IMR-90 (cell line): ENCODE measurements at regions of chrX and their contacts with region 1.

Region 1: DNA sequence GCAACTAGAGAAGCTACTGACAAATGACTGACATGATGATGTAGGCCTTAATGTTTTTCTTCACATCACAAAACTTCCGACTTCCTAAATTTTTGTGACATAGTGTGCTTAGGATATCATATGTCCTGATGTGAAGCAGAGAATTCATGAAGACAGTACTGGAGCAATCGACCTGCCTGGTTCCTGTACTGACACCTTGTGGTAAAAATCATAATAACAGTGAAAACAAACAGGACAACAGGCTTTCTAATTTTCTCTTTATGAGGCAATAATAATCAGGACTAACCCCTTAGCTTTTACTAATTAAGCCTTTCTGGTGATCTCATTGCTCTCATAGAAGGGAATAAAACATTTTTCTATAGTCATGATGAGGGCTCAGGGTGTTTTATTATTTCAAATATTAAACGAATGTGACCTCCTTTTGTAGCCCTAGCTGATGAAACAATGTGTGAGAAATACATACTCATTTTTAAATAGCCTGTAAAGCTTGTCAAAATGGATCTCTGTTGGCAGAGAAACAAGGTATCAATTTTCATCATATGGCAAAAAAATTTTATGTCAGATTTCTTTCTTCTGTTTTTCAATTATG is 158.4 kb downstream of the TENT5D start:
- DNase-seq: peak; percentile 6
- ATAC-seq: peak; percentile 79
- H3K4me3 ChIP-seq: no peak overlapping the region
- H3K27ac ChIP-seq: no peak overlapping the region
- H3K4me1 ChIP-seq: no peaks in the 10 kb centered on the region
- H3K27me3 ChIP-seq: no peaks in the 10 kb centered on the region
- CTCF ChIP-seq: peak; percentile 46
- POLR2A ChIP-seq: no peak
- RAD21 ChIP-seq: peak; percentile 36; the same call in 1 of the 2 replicates

Region 2: DNA sequence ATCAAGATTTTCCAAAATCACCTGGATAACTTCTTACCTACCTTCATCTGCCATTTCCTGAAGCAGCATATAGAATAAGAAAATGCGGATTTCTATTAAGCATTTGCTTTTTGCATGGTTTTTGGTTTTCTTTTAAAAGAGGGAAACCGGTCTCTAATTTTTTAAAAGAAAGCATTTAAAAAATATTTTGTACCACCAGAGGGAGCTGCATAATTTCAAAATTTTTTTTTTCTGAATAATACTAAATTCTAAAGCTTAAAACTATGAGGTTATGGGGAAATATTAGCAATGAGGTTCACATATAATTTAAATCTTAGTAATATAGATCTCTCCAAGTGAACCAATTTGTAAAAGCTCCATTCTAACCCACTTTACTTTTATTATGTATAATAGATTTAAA is 296.1 kb before region 1 on chrX:
- CTCF ChIA-PET with region 1: no interaction called
- POLR2A ChIA-PET with region 1: no interaction called
- dilution Hi-C with region 1: no loop called
- in situ Hi-C with region 1: no loop called
- intact Hi-C with region 1: loop called (anchors 1 kb)
- DNase-seq: no peak
- ATAC-seq: no peak
- H3K4me3 ChIP-seq: no peak overlapping the region
- H3K27ac ChIP-seq: no peak overlapping the region
- H3K4me1 ChIP-seq: no peaks in the 10 kb centered on the region
- H3K27me3 ChIP-seq: no peaks in the 10 kb centered on the region
- CTCF ChIP-seq: peak; percentile 32; the same call in 1 of the 2 replicates
- POLR2A ChIP-seq: no peak
- RAD21 ChIP-seq: no peak

Region 3: DNA sequence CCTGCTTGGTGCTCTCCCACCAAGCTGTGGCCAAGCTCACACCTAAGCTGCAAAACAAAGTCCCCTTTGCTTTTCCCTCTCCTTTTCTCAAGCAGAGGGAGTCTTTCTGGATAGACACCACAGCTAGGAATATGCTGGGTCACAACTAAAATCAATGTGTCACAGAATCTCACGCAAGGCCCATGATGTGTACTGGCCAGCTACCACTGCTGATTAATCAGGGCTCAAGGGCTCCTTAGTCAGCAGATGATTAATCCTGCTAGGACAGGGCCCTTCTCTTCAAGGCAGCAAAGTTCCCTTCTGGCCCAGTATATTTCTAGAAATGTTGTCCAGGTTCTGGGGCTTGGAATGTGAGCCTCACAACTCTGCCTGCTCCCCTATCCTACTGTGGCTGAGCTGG is 190.4 kb before region 1 on chrX:
- CTCF ChIA-PET with region 1: no interaction called
- POLR2A ChIA-PET with region 1: no interaction called
- dilution Hi-C with region 1: no loop called
- in situ Hi-C with region 1: no loop called
- intact Hi-C with region 1: no loop called
- DNase-seq: no peak
- ATAC-seq: no peak
- H3K4me3 ChIP-seq: no peak overlapping the region
- H3K27ac ChIP-seq: no peak overlapping the region
- H3K4me1 ChIP-seq: no peaks in the 10 kb centered on the region
- H3K27me3 ChIP-seq: no peaks in the 10 kb centered on the region
- CTCF ChIP-seq: no peak
- POLR2A ChIP-seq: no peak
- RAD21 ChIP-seq: no peak

Region 4: DNA sequence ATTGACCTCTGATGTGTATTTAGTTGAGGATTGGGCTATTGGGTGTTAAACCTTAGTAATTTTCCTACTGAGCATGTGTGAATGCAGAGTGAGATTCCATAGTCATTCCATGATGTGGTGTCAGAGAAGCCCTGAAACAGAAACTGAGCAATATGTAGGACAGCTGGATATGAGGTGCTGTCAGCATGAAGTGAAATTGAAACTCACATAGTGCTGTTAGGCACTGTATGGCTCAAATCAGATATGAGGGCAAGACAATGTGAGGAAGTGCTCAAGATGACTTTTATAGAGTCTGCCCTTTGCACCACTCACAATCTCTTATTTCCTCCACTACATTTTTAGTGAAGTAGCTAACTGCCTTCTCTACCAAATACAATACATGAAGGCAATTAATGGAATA is 811.6 kb after region 1 on chrX:
- CTCF ChIA-PET with region 1: no interaction called
- POLR2A ChIA-PET with region 1: no interaction called
- dilution Hi-C with region 1: no loop called
- in situ Hi-C with region 1: no loop called
- intact Hi-C with region 1: no loop called
- DNase-seq: no peak
- ATAC-seq: no peak
- H3K4me3 ChIP-seq: no peak overlapping the region
- H3K27ac ChIP-seq: no peak overlapping the region
- H3K4me1 ChIP-seq: no peaks in the 10 kb centered on the region
- H3K27me3 ChIP-seq: no peaks in the 10 kb centered on the region; the same call in 1 of the 2 replicates
- CTCF ChIP-seq: no peak
- POLR2A ChIP-seq: no peak
- RAD21 ChIP-seq: no peak